ENCODE measurements at regions of chr5 and their contacts with region 1.

Region 1: GRCh38 chr5:150640311-150641005 is at the start of gene SYNPO:
- DNase-seq: peak; percentile 98
- ATAC-seq: peak; percentile 44
- H3K4me3 ChIP-seq: peak within 1 kb of the TSS; percentile 50
- H3K27ac ChIP-seq: peak within 1 kb of the TSS; percentile 91
- H3K4me1 ChIP-seq: peaks cover 57% of the 10 kb centered on the region
- H3K27me3 ChIP-seq: no peaks in the 10 kb centered on the region
- CTCF ChIP-seq: 0 out of 2 replicates have a peak, but pooled peaks have one; percentile 2
- POLR2A ChIP-seq: peak; percentile 63; the same call in 1 of the 2 replicates
- RAD21 ChIP-seq: 0 out of 2 replicates have a peak, but pooled peaks have one; percentile 3
- total RNA-seq, gene SYNPO: 3.0 and 3.1 TPM in 2 replicates

Region 2: GRCh38 chr5:150553402-150553801 is 87.1 kb before region 1 on chr5:
- CTCF ChIA-PET with region 1: no interaction called
- POLR2A ChIA-PET with region 1: no interaction called
- dilution Hi-C with region 1: no loop called
- in situ Hi-C with region 1: no loop called
- intact Hi-C with region 1: no loop called
- DNase-seq: no peak
- ATAC-seq: no peak
- H3K4me3 ChIP-seq: no peak overlapping the region
- H3K27ac ChIP-seq: no peak overlapping the region
- H3K4me1 ChIP-seq: no peaks in the 10 kb centered on the region
- H3K27me3 ChIP-seq: no peaks in the 10 kb centered on the region
- CTCF ChIP-seq: no peak
- POLR2A ChIP-seq: no peak
- RAD21 ChIP-seq: no peak

Region 3: GRCh38 chr5:150567021-150567717 is 73.3 kb before region 1 on chr5:
- CTCF ChIA-PET with region 1: no interaction called
- POLR2A ChIA-PET with region 1: no interaction called
- dilution Hi-C with region 1: no loop called
- in situ Hi-C with region 1: no loop called
- intact Hi-C with region 1: loop called (anchors 1 kb)
- DNase-seq: peak; percentile 85
- ATAC-seq: peak; percentile 75
- H3K4me3 ChIP-seq: no peak overlapping the region; the same call in 1 of the 2 replicates
- H3K27ac ChIP-seq: peak overlapping the region; percentile 54; the same call in 1 of the 2 replicates
- H3K4me1 ChIP-seq: peaks cover 5% of the 10 kb centered on the region
- H3K27me3 ChIP-seq: no peaks in the 10 kb centered on the region
- CTCF ChIP-seq: no peak
- POLR2A ChIP-seq: no peak
- RAD21 ChIP-seq: 0 out of 2 replicates have a peak, but pooled peaks have one; percentile 8

Region 4: GRCh38 chr5:150623152-150623885 is 17.1 kb before region 1 on chr5:
- CTCF ChIA-PET with region 1: no interaction called
- POLR2A ChIA-PET with region 1: no interaction called
- dilution Hi-C with region 1: no loop called
- in situ Hi-C with region 1: no loop called
- intact Hi-C with region 1: loop called (anchors 2 kb)
- DNase-seq: peak; percentile 42
- ATAC-seq: no peak
- H3K4me3 ChIP-seq: no peak overlapping the region
- H3K27ac ChIP-seq: peak overlapping the region; percentile 36
- H3K4me1 ChIP-seq: peaks cover 63% of the 10 kb centered on the region
- H3K27me3 ChIP-seq: no peaks in the 10 kb centered on the region
- CTCF ChIP-seq: no peak
- POLR2A ChIP-seq: no peak
- RAD21 ChIP-seq: no peak

Measured in IMR-90 (cell line).